GM13976 (cell line): ENCODE measurements at regions of chr18 and their contacts with region 1.

Region 1: DNA sequence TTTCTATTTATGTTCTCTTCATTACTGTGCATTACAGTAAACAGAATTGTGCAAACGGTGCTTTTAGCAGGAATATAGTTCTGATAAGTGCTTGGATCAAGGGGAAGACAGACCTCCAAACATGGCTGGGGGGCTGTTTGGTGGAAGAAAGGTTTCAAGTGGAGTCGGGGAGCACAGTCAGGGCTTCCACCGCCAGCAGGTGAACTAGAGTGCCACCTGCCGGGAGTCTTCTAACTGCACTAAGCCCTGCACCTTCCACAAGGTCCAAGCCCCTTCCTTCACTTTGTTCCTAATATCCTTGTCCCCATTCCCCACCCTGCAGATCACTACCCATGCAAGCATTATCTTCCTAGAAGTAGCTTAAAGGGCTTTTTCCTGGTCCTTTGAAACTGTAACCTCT is 11.1 kb downstream of the ONECUT2 start:
- DNase-seq: peak; percentile 70
- CTCF ChIP-seq: peak; percentile 60

Region 2: GRCh38 chr18:57561728-57562423 is 115.6 kb after region 1 on chr18:
- in situ Hi-C with region 1: loop called (anchors 10 kb)
- DNase-seq: peak; percentile 66
- CTCF ChIP-seq: peak; percentile 59